H1 (cell line): ENCODE measurements at regions of chr12 and their contacts with region 1.

Region 1: DNA sequence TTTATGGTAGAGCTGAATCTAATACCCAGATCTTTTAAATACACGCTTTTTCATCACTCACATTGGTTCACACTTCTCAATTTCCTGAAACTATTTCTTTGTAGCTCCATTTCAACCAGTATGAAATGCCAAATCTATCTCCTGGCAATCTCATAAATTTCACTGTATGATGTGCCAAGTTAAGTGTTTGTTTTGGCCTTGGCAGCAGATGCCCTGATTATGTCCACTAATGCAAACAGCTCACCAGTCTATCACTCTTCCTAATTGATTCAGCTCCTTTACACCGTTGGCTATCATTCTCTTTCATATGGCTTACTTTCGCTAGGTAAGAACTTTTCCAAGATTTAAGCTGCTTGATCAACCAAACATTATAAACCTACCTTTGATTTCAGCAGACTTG is 58.6 kb downstream of the ZFC3H1 start:
- DNase-seq: no peak
- H3K4me3 ChIP-seq: no peak overlapping the region
- H3K27ac ChIP-seq: no peak overlapping the region
- H3K4me1 ChIP-seq: peaks cover 0 to 2% (median 0%) of the 10 kb centered on the region in 4 experiments; a peak in 2 of 7 replicates
- H3K27me3 ChIP-seq: no peaks in the 10 kb centered on the region
- CTCF ChIP-seq: no peak
- EP300 ChIP-seq: no peak
- POLR2A ChIP-seq: no peak
- RAD21 ChIP-seq: no peak

Region 2: GRCh38 chr12:71517145-71517846 is 87.7 kb before region 1 on chr12:
- CTCF ChIA-PET with region 1: no interaction called
- POLR2A ChIA-PET with region 1: no interaction called
- DNase-seq: no peak
- H3K4me3 ChIP-seq: no peak overlapping the region
- H3K27ac ChIP-seq: no peak overlapping the region
- H3K4me1 ChIP-seq: no peaks in the 10 kb centered on the region
- H3K27me3 ChIP-seq: no peaks in the 10 kb centered on the region
- CTCF ChIP-seq: no peak
- EP300 ChIP-seq: no peak
- POLR2A ChIP-seq: no peak
- RAD21 ChIP-seq: no peak

Region 3: GRCh38 chr12:71594214-71594948 is 10.7 kb before region 1 on chr12:
- CTCF ChIA-PET with region 1: interaction called, 3 read pairs
- POLR2A ChIA-PET with region 1: interaction called, 10 read pairs
- DNase-seq: no peak
- H3K4me3 ChIP-seq: no peak overlapping the region
- H3K27ac ChIP-seq: no peak overlapping the region
- H3K4me1 ChIP-seq: no peaks in the 10 kb centered on the region
- H3K27me3 ChIP-seq: peaks cover 0 to 1% (median 0%) of the 10 kb centered on the region in 4 experiments; a peak in 1 of 7 replicates
- CTCF ChIP-seq: no peak
- EP300 ChIP-seq: no peak
- POLR2A ChIP-seq: no peak
- RAD21 ChIP-seq: no peak